HEK293T (cell line): ENCODE measurements at regions of chr10 and their contacts with region 1.

Region 1: DNA sequence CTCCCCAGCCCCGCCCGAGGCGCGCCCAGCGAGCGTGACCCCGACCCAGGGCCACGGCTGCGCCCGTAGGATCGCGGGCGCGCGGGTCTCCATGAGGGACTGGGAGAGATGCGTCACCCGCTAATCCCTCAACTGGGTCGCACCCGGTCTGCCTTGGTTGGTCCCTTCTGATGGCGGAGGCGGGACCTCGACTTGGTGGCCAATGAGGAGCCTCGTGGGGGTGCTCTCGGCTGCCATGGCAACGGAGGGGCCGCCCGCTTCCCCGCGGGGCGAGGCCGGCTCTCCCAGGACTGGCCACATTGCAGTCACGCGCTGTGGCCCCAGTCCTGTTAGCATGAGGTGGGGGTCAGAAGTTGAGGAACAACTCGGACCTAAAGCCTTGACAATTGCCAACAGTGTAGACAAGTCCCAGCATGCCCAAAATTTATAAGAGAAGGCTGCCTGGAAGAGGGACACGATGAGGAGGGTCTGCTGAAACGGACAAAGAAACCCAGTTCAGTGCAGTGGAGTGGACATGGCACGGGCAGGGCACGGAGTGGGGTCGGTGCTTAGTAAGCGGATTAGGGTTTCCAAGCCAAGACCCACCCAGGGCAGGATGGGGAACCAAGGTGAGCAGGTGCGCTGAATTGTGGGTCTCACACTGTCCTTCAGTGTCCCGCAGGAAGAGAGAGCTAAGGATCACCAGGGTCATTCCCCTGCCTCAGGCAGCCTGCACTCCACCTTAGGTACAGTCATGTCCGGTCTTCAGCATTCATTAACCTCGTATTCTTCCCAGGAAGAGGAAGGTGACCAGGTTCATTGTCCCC is 24.4 kb downstream of the DDIT4 start:
- DNase-seq: peak; percentile 94

Region 2: DNA sequence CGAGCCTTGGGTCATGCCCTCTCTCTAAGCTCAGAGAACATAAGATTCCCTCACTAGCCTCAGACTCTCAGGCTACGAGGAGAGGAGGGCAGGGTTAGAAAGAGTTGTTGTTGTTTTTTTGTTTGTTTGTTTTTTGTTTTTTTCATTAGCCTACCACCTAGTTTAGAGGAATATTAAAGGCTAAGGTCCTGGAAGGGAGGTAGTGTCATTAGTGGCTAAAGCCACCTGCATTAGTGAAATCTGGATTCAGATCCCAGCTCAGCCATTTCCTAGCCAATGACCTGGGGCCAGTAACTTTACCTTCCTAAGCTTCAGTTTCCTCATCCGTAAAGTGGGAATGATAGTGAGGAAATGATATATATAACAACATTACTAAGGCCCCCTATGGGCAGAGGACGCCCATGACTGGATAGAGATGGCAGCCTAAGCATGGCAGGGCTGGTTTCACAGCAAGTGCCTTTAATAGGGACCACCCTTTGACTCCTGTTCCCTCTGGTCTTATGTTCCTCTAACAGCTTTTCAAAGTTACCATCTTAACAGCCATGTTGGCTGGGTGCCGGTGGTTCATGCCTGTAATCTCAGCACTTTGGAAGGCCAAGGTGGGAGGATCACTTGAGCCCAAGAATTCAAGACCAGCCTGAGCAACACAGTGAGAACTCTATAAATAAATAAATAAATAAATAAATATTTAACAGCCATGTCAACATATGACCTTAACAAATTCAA is 19.3 kb before region 1 on chr10:
- CTCF ChIA-PET with region 1: no interaction called
- POLR2A ChIA-PET with region 1: interaction called, 52 read pairs
- DNase-seq: no peak

Region 3: GRCh38 chr10:72344932-72345331 is 46.8 kb after region 1 on chr10:
- CTCF ChIA-PET with region 1: no interaction called
- POLR2A ChIA-PET with region 1: no interaction called
- DNase-seq: no peak